Activated B cell treated with CpG ODN at 0.5 μM for 24 hours (primary cell): ENCODE measurements at regions of chr10 and their contacts with region 1.

Region 1: GRCh38 chr10:69087590-69088470 is at the start of gene SRGN:
- DNase-seq: peak; percentile 26
- ATAC-seq: peak; percentile 71
- H3K4me3 Mint-ChIP-seq: peak within 1 kb of the TSS; percentile 84
- H3K27ac Mint-ChIP-seq: peak within 1 kb of the TSS; percentile 95
- H3K4me1 Mint-ChIP-seq: peaks cover 56% of the 10 kb centered on the region
- H3K27me3 Mint-ChIP-seq: no peaks in the 10 kb centered on the region
- CTCF ChIP-seq: no peak
- total RNA-seq, gene SRGN: 91.4 and 95.5 TPM in 2 replicates

Region 2: GRCh38 chr10:67943909-67944308 is 1143.9 kb before region 1 on chr10:
- CTCF ChIA-PET with region 1: no interaction called
- POLR2A ChIA-PET with region 1: interaction called, 12 read pairs
- intact Hi-C with region 1: no loop called
- DNase-seq: no peak
- ATAC-seq: no peak
- H3K4me3 Mint-ChIP-seq: no peak overlapping the region
- H3K27ac Mint-ChIP-seq: no peak overlapping the region
- H3K4me1 Mint-ChIP-seq: peaks cover 4% of the 10 kb centered on the region
- H3K27me3 Mint-ChIP-seq: no peaks in the 10 kb centered on the region
- CTCF ChIP-seq: no peak

Region 3: GRCh38 chr10:69045441-69046300 is 42.2 kb before region 1 on chr10:
- CTCF ChIA-PET with region 1: interaction called, 3 read pairs
- POLR2A ChIA-PET with region 1: interaction called, 27 read pairs
- intact Hi-C with region 1: loop called (anchors 1 kb)
- DNase-seq: no peak
- ATAC-seq: no peak
- H3K4me3 Mint-ChIP-seq: no peak overlapping the region
- H3K27ac Mint-ChIP-seq: peak overlapping the region; percentile 85
- H3K4me1 Mint-ChIP-seq: peaks cover 27% of the 10 kb centered on the region
- H3K27me3 Mint-ChIP-seq: no peaks in the 10 kb centered on the region
- CTCF ChIP-seq: no peak

Region 4: DNA sequence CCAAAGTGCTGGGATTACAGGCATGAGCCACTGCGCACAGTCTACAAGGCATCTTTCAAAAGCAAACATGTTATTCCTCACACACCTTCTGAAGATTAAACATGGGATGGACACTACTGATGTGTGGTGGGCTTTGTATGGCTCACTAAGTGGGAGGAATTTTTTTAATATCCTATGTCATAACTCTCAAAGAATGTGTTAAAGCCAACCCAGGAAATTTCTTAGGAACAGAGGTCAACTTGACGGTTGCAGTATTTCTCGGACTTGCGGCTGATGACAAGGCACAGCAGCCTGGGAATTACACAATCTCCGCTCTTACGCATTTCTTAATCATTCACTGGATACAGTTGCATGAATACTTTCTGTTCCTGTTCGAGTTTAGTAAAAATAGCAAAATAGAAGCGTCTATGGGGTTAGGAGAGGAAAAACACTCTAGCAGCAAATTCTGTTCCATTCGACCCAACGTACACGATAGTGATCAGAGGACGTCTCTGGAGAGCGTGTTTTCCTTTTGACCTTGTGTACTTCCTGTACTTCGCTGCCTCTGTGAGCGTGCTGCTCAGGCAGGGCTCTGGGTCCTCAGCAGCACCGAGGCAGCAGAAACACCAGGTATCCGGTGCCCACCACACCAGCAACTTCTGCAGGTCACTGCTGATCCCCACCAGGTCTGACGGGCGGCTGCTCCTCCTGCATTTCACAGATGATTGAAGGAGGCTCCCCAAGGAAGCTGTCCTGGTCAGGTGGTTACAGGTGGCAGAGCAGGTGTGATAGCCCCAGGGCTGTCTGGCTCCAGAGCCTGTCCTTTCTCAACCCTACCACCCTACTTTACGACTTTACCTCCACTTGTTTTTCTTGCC is 26.3 kb before region 1 on chr10:
- CTCF ChIA-PET with region 1: interaction called, 5 read pairs
- POLR2A ChIA-PET with region 1: interaction called, 37 read pairs
- intact Hi-C with region 1: loop called (anchors 1 kb)
- DNase-seq: no peak
- ATAC-seq: peak; percentile 64
- H3K4me3 Mint-ChIP-seq: peak overlapping the region; percentile 73
- H3K27ac Mint-ChIP-seq: peak overlapping the region; percentile 18
- H3K4me1 Mint-ChIP-seq: peaks cover 41% of the 10 kb centered on the region
- H3K27me3 Mint-ChIP-seq: no peaks in the 10 kb centered on the region
- CTCF ChIP-seq: no peak

Region 5: DNA sequence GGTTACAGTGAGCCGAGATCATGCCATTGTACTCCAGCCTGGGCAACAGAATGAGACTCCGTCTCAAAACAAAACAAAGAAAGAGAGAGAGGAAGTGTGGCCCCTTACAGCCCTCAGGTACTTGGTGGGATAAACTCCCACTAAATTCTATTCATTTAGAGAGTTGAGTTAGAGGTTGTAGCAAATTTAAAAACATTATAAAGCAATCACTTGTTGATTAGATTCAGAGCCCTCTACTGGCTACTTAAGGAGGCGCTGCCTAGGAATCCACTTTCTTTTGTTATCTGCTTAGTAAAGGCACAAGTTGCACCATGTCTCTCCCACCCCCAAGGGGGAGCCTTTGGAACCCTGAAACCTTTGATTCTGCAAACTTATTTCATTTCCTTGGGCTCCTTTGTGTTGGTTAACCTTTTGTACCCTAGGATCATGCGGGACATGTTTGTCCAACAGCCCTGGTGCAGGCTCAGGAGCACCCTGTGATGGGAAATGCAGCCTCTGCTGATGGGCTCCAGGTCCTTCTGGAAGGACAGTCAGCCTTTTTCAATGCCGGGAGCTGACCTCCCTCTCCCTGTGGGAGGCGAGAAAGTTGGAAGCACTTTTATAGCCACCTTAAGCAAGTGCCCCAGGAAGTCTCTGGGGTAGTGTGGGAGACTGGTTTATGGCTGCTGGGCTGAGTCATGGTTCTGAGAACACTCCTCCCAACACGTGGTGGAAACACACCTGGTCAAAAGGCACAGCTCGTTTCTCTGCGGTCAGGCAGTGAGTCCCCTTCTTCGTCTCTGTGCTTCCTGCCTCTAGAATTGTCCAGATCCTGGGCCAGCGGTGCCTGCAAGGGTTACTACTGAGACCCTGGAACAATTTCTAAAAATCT is 134.6 kb after region 1 on chr10:
- CTCF ChIA-PET with region 1: no interaction called
- POLR2A ChIA-PET with region 1: no interaction called
- intact Hi-C with region 1: loop called (anchors 1 kb)
- DNase-seq: peak; percentile 29
- ATAC-seq: peak; percentile 85
- H3K4me3 Mint-ChIP-seq: peak overlapping the region; percentile 53
- H3K27ac Mint-ChIP-seq: peak overlapping the region; percentile 68
- H3K4me1 Mint-ChIP-seq: peaks cover 29% of the 10 kb centered on the region
- H3K27me3 Mint-ChIP-seq: no peaks in the 10 kb centered on the region
- CTCF ChIP-seq: no peak